ENCODE measurements at regions of chr22 and their contacts with region 1.

Region 1: GRCh38 chr22:42614312-42615091 is at the start of gene POLDIP3:
- DNase-seq: peak; percentile 98 to 99 (median 99)
- ATAC-seq: peak; percentile 69
- H3K4me3 ChIP-seq: peak within 1 kb of the TSS; percentile 91
- H3K4me3 Mint-ChIP-seq: peak within 1 kb of the TSS; percentile 92
- H3K27ac ChIP-seq: peak within 1 kb of the TSS; percentile 83 to 98
- H3K27ac Mint-ChIP-seq: peak within 1 kb of the TSS; percentile 99
- H3K4me1 ChIP-seq: peaks cover 64% of the 10 kb centered on the region
- H3K4me1 Mint-ChIP-seq: peaks cover 60% of the 10 kb centered on the region
- H3K27me3 ChIP-seq: no peaks in the 10 kb centered on the region
- H3K27me3 Mint-ChIP-seq: no peaks in the 10 kb centered on the region
- CTCF ChIP-seq: no peak
- total RNA-seq, gene POLDIP3: 77.7 to 80.7 TPM

Region 2: DNA sequence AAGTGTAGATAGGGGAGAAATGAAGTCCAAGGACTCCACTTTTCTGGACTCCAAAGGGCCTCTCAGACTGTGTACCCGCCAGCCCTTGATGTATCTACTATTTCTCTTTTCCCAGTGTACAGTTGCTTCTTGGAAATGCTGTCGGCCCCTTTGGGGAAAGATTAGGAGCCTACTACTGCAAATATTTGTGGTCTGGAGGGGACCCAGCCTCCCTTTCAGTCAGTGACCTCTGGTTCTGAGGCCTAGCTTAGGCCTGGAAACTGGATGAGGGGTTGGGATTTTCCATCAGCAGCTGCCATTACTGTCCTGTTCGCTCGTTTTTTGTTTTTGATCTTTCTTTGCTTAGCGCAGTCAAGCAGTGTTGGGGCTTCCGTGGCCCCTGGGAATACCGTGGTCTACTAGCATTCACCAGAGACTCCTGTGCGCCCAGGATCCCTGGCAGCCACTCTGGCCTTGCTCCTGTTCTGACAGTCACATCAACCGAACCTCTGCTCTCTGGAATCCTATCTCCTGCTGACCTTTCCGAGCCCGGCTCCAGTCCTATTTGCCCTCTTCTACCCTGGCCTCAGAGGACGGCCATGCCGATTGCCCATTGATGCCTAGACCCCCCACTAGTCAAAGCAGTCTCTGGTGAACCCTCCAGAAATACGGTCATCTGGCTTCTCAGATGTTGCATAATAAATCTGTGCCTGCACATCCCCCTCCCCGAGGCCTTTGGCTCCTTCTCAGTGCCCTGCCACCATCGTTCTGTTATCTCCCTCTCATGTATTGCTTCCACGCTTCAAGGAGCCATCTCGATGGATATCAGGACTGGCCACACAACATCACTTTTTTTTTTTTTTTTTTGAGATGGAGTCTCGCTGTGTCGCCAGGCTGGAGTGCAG is 93.6 kb before region 1 on chr22:
- CTCF ChIA-PET with region 1: no interaction called
- POLR2A ChIA-PET with region 1: interaction called, 3 read pairs
- intact Hi-C with region 1: loop called in 1 of 2 experiments (anchors 5 kb)
- DNase-seq: peak in 1 of 14 experiments; percentile 29
- ATAC-seq: no peak
- H3K4me3 ChIP-seq: no peak overlapping the region
- H3K4me3 Mint-ChIP-seq: peak overlapping the region; percentile 90
- H3K27ac ChIP-seq: no peak overlapping the region
- H3K27ac Mint-ChIP-seq: no peak overlapping the region
- H3K4me1 ChIP-seq: peaks cover 19% of the 10 kb centered on the region
- H3K4me1 Mint-ChIP-seq: peaks cover 14% of the 10 kb centered on the region
- H3K27me3 ChIP-seq: no peaks in the 10 kb centered on the region
- H3K27me3 Mint-ChIP-seq: no peaks in the 10 kb centered on the region
- CTCF ChIP-seq: no peak

Region 3: DNA sequence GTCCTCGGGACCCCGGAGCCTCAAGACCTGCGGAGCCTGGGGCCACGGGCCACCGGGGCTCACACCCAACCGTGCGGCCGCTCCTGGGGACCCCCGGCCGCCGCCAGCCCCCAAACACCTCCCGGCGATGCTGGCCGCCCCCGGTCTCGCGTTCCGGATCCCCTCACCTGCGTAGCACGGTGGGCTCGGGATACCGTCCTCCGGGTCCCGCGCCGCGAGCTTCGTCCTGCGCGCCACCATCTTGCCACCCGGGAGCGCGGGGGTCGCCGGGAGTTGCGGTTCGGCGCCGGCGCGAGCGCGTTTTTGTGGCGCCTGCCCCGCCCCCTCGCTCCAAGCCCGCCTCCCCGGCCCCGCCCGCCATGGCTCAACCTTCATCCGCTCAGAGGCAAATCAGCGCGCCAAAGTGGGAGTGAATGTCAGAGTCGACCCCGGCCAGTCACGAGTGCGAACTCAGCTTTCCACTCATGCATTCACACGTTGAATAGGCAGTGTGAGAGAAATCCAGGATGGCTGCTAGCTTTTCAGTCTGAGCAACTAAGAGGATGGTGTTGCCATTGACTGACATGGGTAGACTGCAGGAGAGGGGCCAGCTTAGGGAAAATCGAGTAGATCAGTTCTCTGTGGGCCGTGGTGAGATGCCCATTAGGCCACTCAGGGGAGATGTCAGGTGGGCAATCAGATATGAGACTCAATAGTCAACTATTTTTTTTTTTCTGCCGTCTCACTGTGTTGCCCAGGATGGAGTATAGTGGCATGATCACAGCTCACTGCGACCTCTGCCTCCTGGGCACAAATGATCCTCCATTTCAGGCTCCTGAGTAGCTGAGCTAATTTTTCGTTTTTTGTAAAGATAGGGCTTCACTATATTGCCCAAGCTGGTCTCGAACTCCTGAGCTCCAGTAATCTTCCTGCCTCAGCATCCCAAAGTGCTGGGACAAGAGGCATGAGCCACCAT is 32.5 kb before region 1 on chr22:
- CTCF ChIA-PET with region 1: interaction called, 3 read pairs
- POLR2A ChIA-PET with region 1: interaction called, 21 read pairs
- intact Hi-C with region 1: loop called in 1 of 2 experiments (anchors 2 kb)
- DNase-seq: peak; percentile 66 to 92 (median 80)
- ATAC-seq: peak; percentile 88
- H3K4me3 ChIP-seq: peak overlapping the region; percentile 55
- H3K4me3 Mint-ChIP-seq: peak overlapping the region; percentile 99
- H3K27ac ChIP-seq: no peak overlapping the region
- H3K27ac Mint-ChIP-seq: peak overlapping the region; percentile 91
- H3K4me1 ChIP-seq: peaks cover 12% of the 10 kb centered on the region
- H3K4me1 Mint-ChIP-seq: peaks cover 12% of the 10 kb centered on the region
- H3K27me3 ChIP-seq: no peaks in the 10 kb centered on the region
- H3K27me3 Mint-ChIP-seq: no peaks in the 10 kb centered on the region
- CTCF ChIP-seq: no peak

Region 4: DNA sequence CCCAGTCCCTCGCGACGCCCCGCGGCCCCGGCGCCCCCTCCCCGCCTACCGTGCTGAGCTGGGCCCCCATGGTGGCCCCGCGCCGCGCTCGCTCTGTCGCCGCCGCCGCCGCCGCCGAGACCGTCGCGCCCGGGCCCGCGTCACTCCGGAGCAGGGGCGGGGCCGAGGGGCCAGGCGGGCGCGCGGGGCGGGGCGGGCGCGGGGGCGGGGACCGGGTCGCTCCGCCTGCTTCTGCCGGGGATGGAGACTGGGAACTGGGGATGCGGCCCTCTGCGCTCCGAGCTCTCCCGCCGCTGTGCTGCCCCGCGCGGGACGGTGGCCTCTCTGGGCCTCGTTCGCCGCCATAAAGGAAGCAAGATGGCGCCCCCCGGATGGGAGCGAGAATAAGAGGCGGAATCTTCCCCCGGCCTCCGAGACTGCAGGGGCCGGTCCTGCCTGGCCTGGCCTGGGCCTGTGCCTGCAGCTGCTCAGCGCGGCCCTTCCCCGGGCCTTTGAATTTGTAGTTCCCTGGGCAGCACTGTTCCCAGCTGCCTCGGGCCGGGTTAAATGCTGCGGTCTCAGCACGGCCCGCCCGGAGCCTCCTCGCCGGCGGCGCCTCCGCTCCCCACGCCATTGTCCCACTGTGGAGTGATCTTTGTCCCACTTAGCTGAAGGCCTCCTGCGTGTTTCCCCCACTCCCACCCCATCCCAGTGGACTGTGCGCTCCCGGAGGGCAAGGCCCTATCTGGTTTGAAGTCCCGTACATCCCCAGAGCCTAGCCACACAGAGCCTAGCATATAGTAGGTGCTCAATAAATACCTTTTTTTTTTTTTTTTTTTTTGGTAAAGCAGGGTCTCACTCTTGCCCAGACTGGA is 35.0 kb after region 1 on chr22 and contains the start of gene CYB5R3:
- CTCF ChIA-PET with region 1: no interaction called
- POLR2A ChIA-PET with region 1: interaction called, 58 read pairs
- intact Hi-C with region 1: loop called (anchors 1 to 2 kb)
- DNase-seq: peak; percentile 50 to 88 (median 72)
- ATAC-seq: peak; percentile 76
- H3K4me3 ChIP-seq: peak within 1 kb of the TSS; percentile 82
- H3K4me3 Mint-ChIP-seq: peak within 1 kb of the TSS; percentile 99
- H3K27ac ChIP-seq: peak within 1 kb of the TSS; percentile 38 to 66
- H3K27ac Mint-ChIP-seq: peak within 1 kb of the TSS; percentile 98
- H3K4me1 ChIP-seq: peaks cover 49% of the 10 kb centered on the region
- H3K4me1 Mint-ChIP-seq: peaks cover 27% of the 10 kb centered on the region
- H3K27me3 ChIP-seq: peaks cover 0 to under 1% of the 10 kb centered on the region in 2 experiments
- H3K27me3 Mint-ChIP-seq: no peaks in the 10 kb centered on the region
- CTCF ChIP-seq: no peak
- total RNA-seq, gene CYB5R3: 39.8 to 41.2 TPM

Region 5: DNA sequence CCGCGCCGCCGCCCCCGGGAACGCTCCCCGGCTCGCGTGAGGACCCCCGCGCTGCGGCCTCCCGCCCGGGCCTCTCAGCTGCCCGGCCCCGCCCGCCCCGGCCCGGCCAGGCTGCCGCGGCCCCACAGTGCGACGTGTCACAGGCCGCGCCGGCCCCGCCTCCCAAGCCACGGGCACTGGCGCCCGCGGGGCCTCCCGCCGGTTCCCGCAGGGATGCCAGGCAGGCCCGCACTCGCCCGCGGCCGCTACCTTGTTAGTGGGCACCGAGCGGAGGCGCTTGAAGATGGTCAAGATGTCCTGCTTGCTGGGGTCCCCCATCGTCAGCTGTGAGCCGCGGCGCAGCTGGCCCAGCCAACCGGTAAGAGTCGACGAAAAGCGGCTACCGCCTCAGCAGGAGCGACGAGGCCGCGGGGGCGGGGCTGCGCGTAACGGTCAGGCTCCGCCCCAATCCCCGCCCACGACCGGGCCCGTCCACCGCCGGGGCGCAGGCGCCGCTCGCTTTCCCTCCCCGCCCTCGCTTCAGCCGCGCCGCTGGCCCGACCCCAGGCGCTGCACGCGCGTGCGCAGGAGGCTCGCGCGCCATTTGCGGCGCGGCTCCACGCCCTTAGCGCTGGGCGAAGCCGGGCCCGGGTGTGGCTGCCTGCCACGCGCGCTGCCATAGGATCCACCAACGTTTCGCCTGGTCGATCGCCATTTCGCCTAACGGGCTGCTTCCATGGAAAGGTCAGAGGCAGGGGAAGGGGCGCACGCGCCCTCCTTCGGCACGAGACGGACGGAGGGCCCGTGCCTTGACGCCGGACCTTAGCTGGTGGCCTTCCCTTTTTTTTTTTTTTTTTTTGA is 242.6 kb after region 1 on chr22 and contains the start of gene ARFGAP3:
- CTCF ChIA-PET with region 1: no interaction called
- POLR2A ChIA-PET with region 1: interaction called, 3 read pairs
- intact Hi-C with region 1: loop called in 1 of 2 experiments (anchors 2 kb)
- DNase-seq: peak; percentile 85 to 98 (median 94)
- ATAC-seq: peak; percentile 93
- H3K4me3 ChIP-seq: peak within 1 kb of the TSS; percentile 74
- H3K4me3 Mint-ChIP-seq: peak within 1 kb of the TSS; percentile 92
- H3K27ac ChIP-seq: peak within 1 kb of the TSS; percentile 86 to 87
- H3K27ac Mint-ChIP-seq: peak within 1 kb of the TSS; percentile 91
- H3K4me1 ChIP-seq: peaks cover 32% of the 10 kb centered on the region
- H3K4me1 Mint-ChIP-seq: peaks cover 12% of the 10 kb centered on the region
- H3K27me3 ChIP-seq: no peaks in the 10 kb centered on the region
- H3K27me3 Mint-ChIP-seq: no peaks in the 10 kb centered on the region
- CTCF ChIP-seq: no peak
- total RNA-seq, gene ARFGAP3: 19.5 to 21.4 TPM

Measured in CD4-positive, alpha-beta T cell (primary cell).